PC-9 (cell line): ENCODE measurements at regions of chr18 and their contacts with region 1.

Region 1: GRCh38 chr18:63848159-63848558 is 39.3 kb upstream of the SERPINB2 start:
- DNase-seq: peak; percentile 12 to 56
- H3K4me3 ChIP-seq: no peak overlapping the region
- H3K27ac ChIP-seq: no peak overlapping the region
- H3K4me1 ChIP-seq: peaks cover 5% of the 10 kb centered on the region; the same call in 1 of the 2 replicates
- H3K27me3 ChIP-seq: no peaks in the 10 kb centered on the region
- CTCF ChIP-seq: peak; percentile 74

Region 2: DNA sequence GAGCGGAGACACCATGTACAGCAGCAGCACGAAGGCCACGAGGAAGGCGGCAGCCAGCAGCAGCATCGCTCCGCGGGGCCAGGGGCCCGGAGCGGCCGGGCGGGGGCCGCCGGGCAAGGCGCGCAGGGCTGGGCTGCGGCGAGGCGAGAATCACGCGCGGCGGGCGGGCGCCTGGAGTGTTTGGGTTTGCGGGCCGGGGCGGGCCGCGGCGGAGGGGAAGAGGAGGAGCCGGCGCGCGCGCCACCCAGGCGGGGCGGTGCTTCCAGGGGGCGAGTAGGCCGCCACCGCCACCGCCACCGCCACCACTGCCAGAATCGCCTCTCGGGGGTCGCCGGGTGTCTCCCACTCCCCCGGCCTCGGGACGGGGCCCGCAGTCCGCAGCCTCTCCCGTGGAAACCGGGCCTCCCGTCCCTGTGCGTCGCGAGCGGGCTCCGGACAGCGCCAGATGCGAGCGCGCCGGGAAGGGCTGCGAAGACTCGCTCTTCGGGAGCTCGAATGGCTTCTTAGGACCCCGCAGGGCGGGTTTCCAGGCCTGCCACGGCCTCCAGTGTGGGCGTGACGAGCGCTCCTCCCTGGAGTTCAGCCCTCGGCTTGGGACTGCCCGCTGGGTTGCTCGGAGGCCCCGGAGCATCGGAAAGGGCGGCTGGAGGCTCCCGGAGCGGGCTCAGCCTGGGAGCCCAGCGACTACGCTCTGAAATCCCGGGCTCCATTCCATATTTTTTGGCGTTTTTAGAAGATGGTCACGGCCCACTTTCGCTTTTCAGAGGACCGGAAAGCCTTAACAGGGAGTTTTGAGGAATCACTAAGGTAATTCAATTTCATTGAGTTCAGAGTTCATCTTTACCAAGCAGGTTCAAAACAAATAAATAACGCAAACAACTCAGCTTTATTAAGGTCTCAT is 480.9 kb before region 1 on chr18 and contains the start of gene KDSR:
- CTCF ChIA-PET with region 1: no interaction called
- POLR2A ChIA-PET with region 1: no interaction called
- intact Hi-C with region 1: loop called (anchors 10 kb)
- DNase-seq: peak; percentile 94 to 95
- H3K4me3 ChIP-seq: peak within 1 kb of the TSS; percentile 99
- H3K27ac ChIP-seq: peak within 1 kb of the TSS; percentile 71
- H3K4me1 ChIP-seq: peaks cover 20% of the 10 kb centered on the region
- H3K27me3 ChIP-seq: no peaks in the 10 kb centered on the region
- CTCF ChIP-seq: no peak
- total RNA-seq, gene KDSR: 33.8 and 41.7 TPM in 2 replicates

Region 3: GRCh38 chr18:63578357-63578958 is 269.7 kb before region 1 on chr18:
- CTCF ChIA-PET with region 1: no interaction called
- POLR2A ChIA-PET with region 1: no interaction called
- intact Hi-C with region 1: loop called (anchors 1 kb)
- DNase-seq: peak in 1 of 2 experiments; percentile 20
- H3K4me3 ChIP-seq: no peak overlapping the region
- H3K27ac ChIP-seq: no peak overlapping the region
- H3K4me1 ChIP-seq: no peaks in the 10 kb centered on the region
- H3K27me3 ChIP-seq: no peaks in the 10 kb centered on the region
- CTCF ChIP-seq: peak; percentile 90

Region 4: GRCh38 chr18:63741769-63742168 is 106.4 kb before region 1 on chr18:
- CTCF ChIA-PET with region 1: no interaction called
- POLR2A ChIA-PET with region 1: no interaction called
- intact Hi-C with region 1: loop called (anchors 1 kb)
- DNase-seq: no peak
- H3K4me3 ChIP-seq: no peak overlapping the region
- H3K27ac ChIP-seq: no peak overlapping the region
- H3K4me1 ChIP-seq: peaks cover 19% of the 10 kb centered on the region
- H3K27me3 ChIP-seq: no peaks in the 10 kb centered on the region
- CTCF ChIP-seq: peak; percentile 73

Region 5: DNA sequence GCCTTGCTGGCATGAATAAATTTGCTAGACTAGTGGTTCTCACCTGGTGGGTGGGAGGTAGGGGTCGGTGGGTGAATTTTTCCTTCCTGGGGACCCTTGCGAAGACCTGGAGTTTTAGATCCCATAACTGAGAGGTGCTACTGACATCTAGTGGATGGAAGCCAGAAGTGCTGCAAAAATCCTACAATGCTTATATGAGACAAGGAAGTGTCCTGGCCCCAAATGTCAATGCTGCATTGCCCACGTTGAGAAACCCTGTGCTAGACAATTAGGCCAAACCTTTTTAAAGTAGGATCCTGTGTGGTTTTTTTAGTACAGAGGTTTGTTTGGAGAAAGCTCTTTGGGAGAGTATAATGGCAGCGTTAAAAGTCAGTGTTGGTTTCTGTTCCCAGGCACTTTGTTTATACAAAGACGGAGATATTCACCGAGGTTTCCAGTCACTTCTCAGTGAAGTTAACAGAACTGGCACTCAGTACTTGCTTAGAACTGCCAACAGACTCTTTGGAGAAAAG is 131.3 kb after region 1 on chr18:
- CTCF ChIA-PET with region 1: no interaction called
- POLR2A ChIA-PET with region 1: no interaction called
- intact Hi-C with region 1: loop called (anchors 2 kb)
- DNase-seq: peak in 1 of 2 experiments; percentile 62
- H3K4me3 ChIP-seq: no peak overlapping the region
- H3K27ac ChIP-seq: no peak overlapping the region
- H3K4me1 ChIP-seq: no peaks in the 10 kb centered on the region
- H3K27me3 ChIP-seq: no peaks in the 10 kb centered on the region
- CTCF ChIP-seq: peak; percentile 89